HAP-1 (cell line): ENCODE measurements at regions of chr13 and their contacts with region 1.

Region 1: GRCh38 chr13:35953537-35954206 is 177.5 kb downstream of the DCLK1 start:
- DNase-seq: peak; percentile 88 to 98
- H3K4me3 ChIP-seq: no peak overlapping the region
- H3K4me1 ChIP-seq: peaks cover 9% of the 10 kb centered on the region
- H3K27me3 ChIP-seq: no peaks in the 10 kb centered on the region

Region 2: DNA sequence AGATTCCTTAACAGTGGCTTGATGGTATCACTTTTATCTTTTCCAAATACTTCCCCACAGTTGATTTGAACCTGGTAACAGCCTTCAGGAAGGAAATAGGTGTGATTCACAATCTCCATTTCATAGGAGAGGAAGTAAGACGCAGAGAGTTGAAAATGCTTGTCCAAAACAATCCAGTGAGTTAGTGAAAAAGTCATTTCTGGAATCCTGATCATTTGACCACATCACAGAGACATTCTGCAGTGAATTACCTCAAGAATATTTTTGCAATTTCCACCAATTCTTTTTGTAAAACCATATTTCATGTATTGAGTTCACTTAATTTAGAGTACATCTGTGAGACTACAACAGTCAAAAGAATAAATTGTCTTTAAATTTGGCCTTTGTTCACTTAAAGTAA is 115.3 kb before region 1 on chr13:
- in situ Hi-C with region 1: loop called (anchors 10 kb)
- DNase-seq: no peak
- H3K4me3 ChIP-seq: no peak overlapping the region
- H3K4me1 ChIP-seq: peaks cover 6% of the 10 kb centered on the region
- H3K27me3 ChIP-seq: no peaks in the 10 kb centered on the region